WTC11 (cell line): ENCODE measurements at regions of chr5 and their contacts with region 1.

Region 1: DNA sequence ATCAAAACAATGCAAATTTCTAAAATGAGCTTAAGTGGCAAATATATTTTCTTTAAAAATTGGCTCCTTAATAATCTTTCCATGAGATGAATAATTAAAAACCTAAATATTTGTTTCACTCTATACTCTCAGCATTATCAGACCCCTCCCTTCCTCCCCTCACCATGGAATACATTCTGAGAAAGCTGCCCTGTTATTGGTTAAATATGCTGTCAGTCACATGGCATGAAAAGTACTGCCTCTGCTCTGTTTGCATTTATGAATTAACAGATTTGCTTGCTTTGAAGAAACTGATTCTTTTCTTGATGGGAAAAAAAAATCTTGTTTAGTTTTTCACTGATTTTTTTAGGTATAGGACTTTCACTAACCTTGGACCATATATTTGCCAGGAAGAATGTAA is 17.0 kb upstream of the RPS23 start:
- DNase-seq: no peak
- ATAC-seq: 0 out of 2 replicates have a peak, but pooled peaks have one; percentile 20
- H3K4me3 Mint-ChIP-seq: 0 out of 2 replicates have a peak overlapping the region, but pooled peaks have one; percentile 6
- H3K27ac Mint-ChIP-seq: no peak overlapping the region
- H3K4me1 Mint-ChIP-seq: peaks cover 52% of the 10 kb centered on the region
- H3K27me3 Mint-ChIP-seq: peaks cover 12% of the 10 kb centered on the region
- CTCF ChIP-seq: no peak

Region 2: DNA sequence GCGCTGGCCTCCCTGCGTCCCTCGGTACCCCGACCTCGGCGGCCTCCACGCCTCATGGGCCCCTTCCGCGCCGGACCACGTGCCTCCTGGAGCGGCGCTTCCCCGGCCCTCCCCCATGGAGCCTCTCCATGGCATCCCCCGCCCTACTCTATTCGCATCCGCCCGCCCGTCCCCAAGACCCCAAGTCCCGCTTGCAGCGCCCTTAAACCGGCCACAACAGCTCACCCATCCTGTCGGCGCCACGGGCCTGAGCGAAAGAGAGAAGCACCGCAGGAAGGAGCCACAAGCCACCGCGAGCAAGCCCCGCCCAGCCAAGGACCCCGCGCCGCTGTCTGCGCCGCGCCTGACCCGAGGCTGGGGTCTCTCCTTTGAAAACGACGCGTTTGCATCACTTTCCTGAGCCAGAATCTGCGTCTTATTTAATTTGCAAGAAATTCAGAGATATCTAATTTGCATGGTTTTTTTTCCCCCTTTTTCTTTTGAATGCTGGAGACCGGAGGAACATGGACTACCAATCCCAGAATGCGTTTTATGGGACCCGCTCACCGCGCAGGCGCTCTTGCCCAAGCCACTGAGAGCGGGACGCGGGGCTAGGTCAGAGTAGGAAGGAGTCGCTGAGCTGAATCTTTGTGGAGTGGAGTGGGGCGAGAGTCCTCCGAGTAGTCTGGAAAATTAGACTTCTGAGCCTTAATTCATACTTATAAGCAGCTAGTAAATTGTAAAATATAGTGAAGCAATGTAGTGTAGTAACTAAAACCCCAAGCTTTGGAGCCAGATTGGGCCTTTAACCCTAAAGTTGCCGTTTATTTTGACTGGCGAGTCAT is 16.8 kb before region 1 on chr5 and contains the start of gene RPS23:
- CTCF ChIA-PET with region 1: interaction called, 5 read pairs
- POLR2A ChIA-PET with region 1: interaction called, 14 read pairs
- DNase-seq: peak; percentile 81
- ATAC-seq: peak; percentile 68
- H3K4me3 Mint-ChIP-seq: peak within 1 kb of the TSS; percentile 93
- H3K27ac Mint-ChIP-seq: peak within 1 kb of the TSS; percentile 99
- H3K4me1 Mint-ChIP-seq: peaks cover 34% of the 10 kb centered on the region
- H3K27me3 Mint-ChIP-seq: no peaks in the 10 kb centered on the region
- CTCF ChIP-seq: no peak
- total RNA-seq, gene RPS23: 2,589 to 2,799 TPM (median 2,697 TPM) in 3 replicates

Region 3: GRCh38 chr5:82717738-82718137 is 422.6 kb after region 1 on chr5:
- CTCF ChIA-PET with region 1: no interaction called
- POLR2A ChIA-PET with region 1: no interaction called
- DNase-seq: no peak
- ATAC-seq: no peak
- H3K4me3 Mint-ChIP-seq: no peak overlapping the region
- H3K27ac Mint-ChIP-seq: no peak overlapping the region
- H3K4me1 Mint-ChIP-seq: peaks cover 12% of the 10 kb centered on the region
- H3K27me3 Mint-ChIP-seq: no peaks in the 10 kb centered on the region; the same call in 1 of the 2 replicates
- CTCF ChIP-seq: no peak